Esophagus muscularis mucosa (tissue), 4 donors: ENCODE measurements at regions of chr9 and their contacts with region 1.

Region 1: DNA sequence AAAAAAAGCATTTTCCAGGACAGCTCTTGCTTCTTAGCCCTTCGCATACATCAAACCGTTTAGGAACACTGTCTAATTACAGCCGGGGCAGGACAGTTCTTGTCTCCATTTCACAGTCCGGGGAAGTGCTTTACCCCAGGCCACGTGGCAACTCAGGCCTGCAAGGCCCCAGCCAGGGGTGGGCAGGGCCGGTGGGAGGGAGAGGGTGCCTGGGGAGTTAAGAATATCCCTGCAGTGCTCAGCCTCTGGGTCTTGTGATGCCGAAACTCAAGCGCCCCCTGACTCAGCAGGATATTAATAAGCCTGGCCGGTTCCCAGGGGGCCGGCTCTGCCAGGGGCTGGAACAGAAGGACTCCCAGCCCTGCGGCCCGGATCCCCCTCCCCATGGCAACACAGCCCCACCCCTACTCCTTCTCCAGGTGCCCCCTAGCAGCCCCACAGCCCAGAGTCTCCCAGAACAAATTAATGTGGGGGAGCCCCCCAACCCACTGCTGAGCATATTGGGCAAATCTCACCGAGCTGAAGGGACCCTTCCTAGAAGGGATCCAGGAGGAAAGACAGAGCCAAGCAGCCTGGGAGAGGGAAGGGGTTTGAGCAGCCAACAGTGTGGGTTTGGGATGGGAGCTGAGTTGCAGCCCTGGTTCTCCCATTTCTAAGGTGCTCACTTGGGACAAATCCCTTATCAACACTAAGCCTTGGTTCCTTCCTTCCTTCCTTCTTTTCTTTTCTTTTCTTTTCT is 45.3 kb downstream of the PLPP7 start:
- DNase-seq: no peak
- H3K4me3 ChIP-seq: no peak overlapping the region
- H3K27ac ChIP-seq: no peak overlapping the region
- H3K4me1 ChIP-seq: peaks cover 4 to 9% (median 5%) of the 10 kb centered on the region in 4 donors
- H3K27me3 ChIP-seq: peaks cover 0 to 10% (median 0%) of the 10 kb centered on the region in 4 donors
- CTCF ChIP-seq: no peak
- EP300 ChIP-seq: no peak
- POLR2A ChIP-seq: no peak

Region 2: GRCh38 chr9:131056781-131057506 is 277.9 kb before region 1 on chr9:
- intact Hi-C with region 1: loop called (anchors 5 kb)
- DNase-seq: no peak
- H3K4me3 ChIP-seq: no peak overlapping the region
- H3K27ac ChIP-seq: no peak overlapping the region
- H3K4me1 ChIP-seq: no peaks in the 10 kb centered on the region
- H3K27me3 ChIP-seq: peaks cover 0 to 36% (median 0%) of the 10 kb centered on the region in 4 donors
- CTCF ChIP-seq: no peak
- EP300 ChIP-seq: no peak
- POLR2A ChIP-seq: no peak

Region 3: DNA sequence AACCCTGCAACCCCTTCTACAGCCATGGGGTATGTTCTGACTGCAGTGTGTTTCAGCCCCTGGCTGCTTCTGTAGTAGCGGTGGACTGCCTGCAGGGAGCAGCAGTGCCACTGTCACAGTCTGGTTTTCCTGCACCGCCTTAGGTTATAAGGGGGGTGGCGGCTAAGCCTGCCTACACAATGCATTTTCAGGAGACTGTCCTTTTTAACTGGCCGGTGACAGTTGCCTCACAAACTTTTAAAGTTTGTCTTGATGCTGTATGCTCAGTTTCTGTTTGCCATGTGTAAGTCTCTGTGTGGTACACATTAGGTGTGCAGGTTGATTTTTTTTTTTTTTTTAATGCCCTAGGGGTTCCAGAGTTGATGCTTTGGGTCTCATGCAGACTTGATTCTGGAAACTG is 156.4 kb before region 1 on chr9:
- intact Hi-C with region 1: loop called (anchors 1 kb)
- DNase-seq: no peak
- H3K4me3 ChIP-seq: no peak overlapping the region
- H3K27ac ChIP-seq: no peak overlapping the region
- H3K4me1 ChIP-seq: peaks cover 0 to 10% (median 8%) of the 10 kb centered on the region in 4 donors
- H3K27me3 ChIP-seq: no peaks in the 10 kb centered on the region
- CTCF ChIP-seq: peak; percentile 83 to 95 (median 91)
- EP300 ChIP-seq: no peak
- POLR2A ChIP-seq: no peak

Region 4: GRCh38 chr9:131502781-131503625 is 168.2 kb after region 1 on chr9 and contains the start of gene POMT1:
- intact Hi-C with region 1: no loop called
- DNase-seq: peak; percentile 95
- H3K4me3 ChIP-seq: peak within 1 kb of the TSS; percentile 77 to 98 (median 93)
- H3K27ac ChIP-seq: peak within 1 kb of the TSS; percentile 81 to 86 (median 84)
- H3K4me1 ChIP-seq: peaks cover 17 to 37% (median 29%) of the 10 kb centered on the region in 4 donors
- H3K27me3 ChIP-seq: no peaks in the 10 kb centered on the region
- CTCF ChIP-seq: peak in 1 of 3 experiments; percentile 7
- EP300 ChIP-seq: no peak
- POLR2A ChIP-seq: no peak
- total RNA-seq, gene POMT1: 22.6 to 39.2 (median 25.0) TPM